ENCODE measurements at regions of chr7 and their contacts with region 1.

Region 1: DNA sequence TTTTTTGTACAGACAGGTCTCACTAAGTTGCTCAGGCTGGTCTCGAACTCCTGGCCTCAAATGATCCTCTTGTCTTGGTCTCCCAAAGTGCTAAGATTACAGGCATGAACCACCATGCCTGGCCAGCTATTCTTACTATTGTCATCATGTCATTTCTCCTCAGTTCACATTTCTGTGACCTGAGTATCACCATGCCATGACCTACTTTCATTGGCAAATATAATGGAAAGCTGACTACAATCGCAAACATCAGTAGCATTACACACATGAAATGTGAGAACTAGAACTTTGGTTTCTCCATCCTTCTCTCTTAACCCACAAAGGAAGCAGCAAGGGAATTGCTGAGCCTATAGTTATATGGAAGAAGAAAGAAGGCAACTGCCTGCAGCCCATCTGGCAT is 26.0 kb upstream of the WIPF3 start:
- DNase-seq: no peak
- ATAC-seq: no peak
- H3K4me3 ChIP-seq: no peak overlapping the region
- H3K27ac ChIP-seq: no peak overlapping the region
- H3K4me1 ChIP-seq: no peaks in the 10 kb centered on the region
- H3K27me3 ChIP-seq: peaks cover 30% of the 10 kb centered on the region; the same call in 1 of the 2 replicates
- CTCF ChIP-seq: no peak
- POLR2A ChIP-seq: no peak
- RAD21 ChIP-seq: no peak

Region 2: DNA sequence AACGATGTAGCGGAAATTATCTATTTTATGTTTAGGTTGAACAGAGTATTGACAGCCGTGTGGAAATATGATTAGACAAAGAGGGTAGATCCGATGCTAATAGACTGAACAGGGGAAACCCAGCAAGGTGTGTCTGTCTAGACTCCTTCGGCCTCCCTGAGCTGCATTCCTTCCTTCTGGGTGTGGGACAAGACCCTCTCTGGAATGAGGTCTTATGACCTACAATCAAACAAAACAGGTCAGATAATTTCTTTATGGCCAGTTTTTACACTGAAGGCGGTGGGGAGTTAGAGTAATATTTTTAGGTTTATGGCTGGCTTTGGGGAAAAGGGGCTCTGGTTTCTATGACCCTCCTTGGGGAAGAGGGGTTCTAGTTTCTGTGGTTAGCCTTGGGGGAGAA is 67.2 kb after region 1 on chr7:
- CTCF ChIA-PET with region 1: no interaction called
- POLR2A ChIA-PET with region 1: no interaction called
- RAD21 ChIA-PET with region 1: no interaction called
- intact Hi-C with region 1: loop called (anchors 2 kb)
- DNase-seq: no peak
- ATAC-seq: no peak
- H3K4me3 ChIP-seq: no peak overlapping the region
- H3K27ac ChIP-seq: no peak overlapping the region
- H3K4me1 ChIP-seq: no peaks in the 10 kb centered on the region
- H3K27me3 ChIP-seq: no peaks in the 10 kb centered on the region
- CTCF ChIP-seq: no peak
- POLR2A ChIP-seq: no peak
- RAD21 ChIP-seq: no peak

Region 3: DNA sequence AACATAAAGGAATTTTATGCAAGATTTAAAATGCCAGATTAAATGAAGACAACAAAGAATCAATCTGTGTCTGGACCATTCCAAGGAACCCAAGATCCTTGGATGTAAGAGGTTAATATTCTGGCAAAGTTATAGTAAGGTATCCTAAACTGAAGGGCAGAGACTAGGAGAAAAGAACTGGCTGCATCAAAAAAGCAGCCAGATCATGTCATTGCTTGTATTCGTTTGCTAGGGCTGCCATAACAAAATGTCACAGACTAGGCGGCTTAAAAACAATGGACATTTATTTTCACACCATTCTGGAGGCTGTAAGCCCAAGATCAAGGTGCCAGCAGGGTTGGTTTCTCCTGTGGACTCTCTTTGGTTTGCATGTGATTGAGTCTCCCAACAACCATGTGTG is 1371.5 kb after region 1 on chr7:
- CTCF ChIA-PET with region 1: no interaction called
- POLR2A ChIA-PET with region 1: no interaction called
- RAD21 ChIA-PET with region 1: no interaction called
- intact Hi-C with region 1: no loop called
- DNase-seq: no peak
- ATAC-seq: no peak
- H3K4me3 ChIP-seq: no peak overlapping the region
- H3K27ac ChIP-seq: no peak overlapping the region
- H3K4me1 ChIP-seq: no peaks in the 10 kb centered on the region
- H3K27me3 ChIP-seq: peaks cover 3% of the 10 kb centered on the region; the same call in 1 of the 2 replicates
- CTCF ChIP-seq: no peak
- POLR2A ChIP-seq: no peak
- RAD21 ChIP-seq: no peak